Right ventricle myocardium inferior (tissue), 1 donor: ENCODE measurements at regions of chr6 and their contacts with region 1.

Region 1: DNA sequence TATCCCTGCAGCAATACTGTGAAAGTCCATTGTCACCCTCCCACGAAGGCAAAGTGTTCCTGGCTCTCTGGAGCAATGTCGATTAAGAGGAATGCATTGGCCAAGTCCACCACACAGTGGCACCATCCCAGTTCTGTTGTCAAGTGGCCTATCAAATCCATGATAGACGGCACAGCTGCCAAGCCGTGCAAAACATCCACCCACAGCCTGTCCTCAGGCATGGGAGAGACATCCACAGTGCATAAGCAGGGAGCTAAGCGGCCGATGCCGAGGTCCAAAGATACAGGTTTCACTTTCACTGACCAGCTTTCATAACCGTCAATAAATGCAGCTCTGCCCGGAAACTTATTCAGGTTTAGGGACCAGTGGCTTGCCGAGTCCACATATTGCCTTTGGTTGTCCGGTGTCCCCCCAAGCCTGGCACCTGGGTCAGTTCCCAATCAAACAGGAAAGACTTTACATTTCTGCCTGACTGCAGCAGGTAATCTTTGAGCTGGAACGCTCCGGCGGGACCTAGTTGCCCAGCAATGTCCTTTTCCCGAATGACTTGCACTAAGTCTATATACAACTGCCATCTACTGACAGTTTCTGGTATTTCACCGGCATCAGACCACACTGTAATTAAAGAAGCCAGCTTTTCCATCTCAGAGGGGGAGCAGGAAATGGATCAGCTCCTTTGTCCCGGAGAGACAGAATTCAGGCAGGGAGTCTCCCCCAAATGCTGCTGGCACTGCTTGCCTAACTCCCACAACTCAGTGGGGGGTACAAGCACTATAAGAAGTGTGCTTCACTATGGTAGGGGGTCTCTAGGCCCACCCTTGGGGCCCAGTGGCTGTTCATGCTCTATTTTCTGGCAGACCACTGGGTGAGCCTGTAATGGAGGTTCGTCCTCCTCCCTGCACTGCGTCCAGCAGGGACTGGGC is 6.3 kb downstream of the ZKSCAN3 start:
- DNase-seq: peak; percentile 84
- ATAC-seq: peak; percentile 88

Region 2: GRCh38 chr6:28080631-28081485 is 275.1 kb before region 1 on chr6:
- intact Hi-C with region 1: loop called (anchors 5 kb)
- DNase-seq: peak; percentile 95
- ATAC-seq: peak; percentile 99

Region 3: GRCh38 chr6:28252009-28252975 is 103.7 kb before region 1 on chr6 and contains the start of gene ZKSCAN4:
- intact Hi-C with region 1: loop called (anchors 2 kb)
- DNase-seq: peak; percentile 69
- ATAC-seq: peak; percentile 98
- total RNA-seq, gene ZKSCAN4: 2.5 TPM

Region 4: GRCh38 chr6:28281288-28282064 is 74.5 kb before region 1 on chr6 and contains the start of gene PGBD1:
- intact Hi-C with region 1: loop called (anchors 5 kb)
- DNase-seq: peak; percentile 86
- ATAC-seq: peak; percentile 96
- total RNA-seq, gene PGBD1: 2.5 TPM